ENCODE measurements at regions of chr10 and their contacts with region 1.

Region 1: GRCh38 chr10:95693668-95694534 is at the start of gene TCTN3:
- DNase-seq: peak; percentile 98
- H3K4me3 ChIP-seq: peak within 1 kb of the TSS; percentile 68 to 87
- H3K27ac ChIP-seq: peak within 1 kb of the TSS; percentile 79 to 88
- H3K4me1 ChIP-seq: peaks cover 4 to 12% of the 10 kb centered on the region in 2 donors
- H3K27me3 ChIP-seq: no peaks in the 10 kb centered on the region
- CTCF ChIP-seq: peak; percentile 98 to 100 (median 100)
- POLR2A ChIP-seq: peak; percentile 46 to 77
- total RNA-seq, gene TCTN3: 27.6 to 41.9 (median 30.6) TPM

Region 2: GRCh38 chr10:95810198-95810976 is 116.5 kb after region 1 on chr10:
- intact Hi-C with region 1: no loop called
- DNase-seq: no peak
- H3K4me3 ChIP-seq: no peak overlapping the region
- H3K27ac ChIP-seq: no peak overlapping the region
- H3K4me1 ChIP-seq: peaks cover 0 to 6% of the 10 kb centered on the region in 2 donors
- H3K27me3 ChIP-seq: no peaks in the 10 kb centered on the region
- CTCF ChIP-seq: no peak
- POLR2A ChIP-seq: no peak

Region 3: GRCh38 chr10:95841661-95842498 is 148.0 kb after region 1 on chr10:
- intact Hi-C with region 1: loop called (anchors 10 kb)
- DNase-seq: peak in 1 of 2 donors; percentile 55
- H3K4me3 ChIP-seq: no peak overlapping the region
- H3K27ac ChIP-seq: peak overlapping the region; percentile 50 to 61
- H3K4me1 ChIP-seq: peaks cover 0 to 5% of the 10 kb centered on the region in 2 donors
- H3K27me3 ChIP-seq: no peaks in the 10 kb centered on the region
- CTCF ChIP-seq: peak; percentile 61 to 83 (median 80)
- POLR2A ChIP-seq: no peak

Measured in uterus (tissue), 4 donors.